ENCODE measurements at regions of chr2 and their contacts with region 1.

Region 1: DNA sequence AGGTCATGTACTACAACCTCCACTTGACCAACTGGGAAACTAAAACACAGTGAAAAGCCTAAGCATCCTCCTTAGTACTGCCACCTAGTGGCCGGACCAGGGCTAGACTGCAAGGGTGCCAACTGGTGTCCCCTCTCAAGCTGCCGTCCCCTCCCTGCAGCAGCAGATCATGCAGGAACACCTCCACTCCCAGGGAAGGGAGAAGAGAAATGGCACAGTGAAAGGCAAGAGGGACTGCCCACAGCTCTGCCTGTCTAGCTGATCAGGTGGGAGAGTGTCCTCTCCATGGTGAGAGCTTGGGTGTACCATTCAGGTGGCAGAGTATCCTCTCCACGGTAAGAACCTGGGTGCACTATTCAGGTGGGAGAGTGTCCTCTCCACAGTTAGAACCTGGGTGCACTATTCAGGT is 78.1 kb downstream of the AAK1 start:
- DNase-seq: peak; percentile 38 to 59 (median 54)
- ATAC-seq: peak; percentile 50 to 71 (median 60)
- H3K4me3 ChIP-seq: no peak overlapping the region
- H3K27ac ChIP-seq: no peak overlapping the region
- H3K4me1 ChIP-seq: peaks cover 0 to 20% (median 3%) of the 10 kb centered on the region in 4 donors
- H3K27me3 ChIP-seq: no peaks in the 10 kb centered on the region
- CTCF ChIP-seq: peak; percentile 47 to 71 (median 63)
- POLR2A ChIP-seq: no peak

Region 2: GRCh38 chr2:69163109-69163508 is 402.3 kb before region 1 on chr2:
- intact Hi-C with region 1: no loop called
- DNase-seq: no peak
- ATAC-seq: peak; percentile 42 to 67 (median 58)
- H3K4me3 ChIP-seq: no peak overlapping the region
- H3K27ac ChIP-seq: peak overlapping the region in 1 of 3 donors; percentile 32
- H3K4me1 ChIP-seq: peaks cover 0 to 14% (median 0%) of the 10 kb centered on the region in 4 donors
- H3K27me3 ChIP-seq: no peaks in the 10 kb centered on the region
- CTCF ChIP-seq: no peak
- POLR2A ChIP-seq: no peak

Region 3: GRCh38 chr2:69643602-69644505 is 78.4 kb after region 1 on chr2 and contains the start of gene AAK1:
- intact Hi-C with region 1: no loop called
- DNase-seq: peak; percentile 94 to 95 (median 94)
- ATAC-seq: peak; percentile 85 to 95 (median 92)
- H3K4me3 ChIP-seq: peak within 1 kb of the TSS; percentile 82 to 99 (median 97)
- H3K27ac ChIP-seq: peak within 1 kb of the TSS; percentile 91 to 98 (median 95)
- H3K4me1 ChIP-seq: peaks cover 0 to 16% (median 0%) of the 10 kb centered on the region in 4 donors
- H3K27me3 ChIP-seq: no peaks in the 10 kb centered on the region
- CTCF ChIP-seq: no peak
- POLR2A ChIP-seq: peak; percentile 89
- total RNA-seq, gene AAK1: 12.7 to 30.5 (median 20.5) TPM

Region 4: DNA sequence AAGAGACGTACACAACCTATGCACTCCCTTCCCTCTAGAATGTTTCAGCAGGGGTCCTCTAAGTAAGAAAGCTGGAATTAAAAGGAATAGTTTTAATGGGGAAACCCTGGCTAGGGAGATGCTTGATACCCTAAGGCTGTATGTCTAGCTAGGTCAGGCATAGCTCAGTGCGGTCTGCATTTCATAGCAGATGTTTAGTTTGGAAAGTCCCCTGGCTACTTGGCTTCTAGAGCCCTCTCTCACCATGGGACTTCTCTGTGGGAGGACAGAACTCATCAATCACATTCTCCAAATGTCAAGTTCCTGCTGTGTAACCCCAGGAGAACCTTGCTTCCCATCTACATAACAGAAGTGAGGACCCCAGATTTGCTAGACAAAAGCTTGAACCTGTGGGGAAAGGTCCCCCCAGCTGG is 152.4 kb after region 1 on chr2:
- intact Hi-C with region 1: loop called (anchors 10 kb)
- DNase-seq: no peak
- ATAC-seq: no peak
- H3K4me3 ChIP-seq: no peak overlapping the region
- H3K27ac ChIP-seq: no peak overlapping the region
- H3K4me1 ChIP-seq: no peaks in the 10 kb centered on the region
- H3K27me3 ChIP-seq: no peaks in the 10 kb centered on the region
- CTCF ChIP-seq: no peak
- POLR2A ChIP-seq: no peak